ENCODE measurements at regions of chr2 and their contacts with region 1.

Region 1: DNA sequence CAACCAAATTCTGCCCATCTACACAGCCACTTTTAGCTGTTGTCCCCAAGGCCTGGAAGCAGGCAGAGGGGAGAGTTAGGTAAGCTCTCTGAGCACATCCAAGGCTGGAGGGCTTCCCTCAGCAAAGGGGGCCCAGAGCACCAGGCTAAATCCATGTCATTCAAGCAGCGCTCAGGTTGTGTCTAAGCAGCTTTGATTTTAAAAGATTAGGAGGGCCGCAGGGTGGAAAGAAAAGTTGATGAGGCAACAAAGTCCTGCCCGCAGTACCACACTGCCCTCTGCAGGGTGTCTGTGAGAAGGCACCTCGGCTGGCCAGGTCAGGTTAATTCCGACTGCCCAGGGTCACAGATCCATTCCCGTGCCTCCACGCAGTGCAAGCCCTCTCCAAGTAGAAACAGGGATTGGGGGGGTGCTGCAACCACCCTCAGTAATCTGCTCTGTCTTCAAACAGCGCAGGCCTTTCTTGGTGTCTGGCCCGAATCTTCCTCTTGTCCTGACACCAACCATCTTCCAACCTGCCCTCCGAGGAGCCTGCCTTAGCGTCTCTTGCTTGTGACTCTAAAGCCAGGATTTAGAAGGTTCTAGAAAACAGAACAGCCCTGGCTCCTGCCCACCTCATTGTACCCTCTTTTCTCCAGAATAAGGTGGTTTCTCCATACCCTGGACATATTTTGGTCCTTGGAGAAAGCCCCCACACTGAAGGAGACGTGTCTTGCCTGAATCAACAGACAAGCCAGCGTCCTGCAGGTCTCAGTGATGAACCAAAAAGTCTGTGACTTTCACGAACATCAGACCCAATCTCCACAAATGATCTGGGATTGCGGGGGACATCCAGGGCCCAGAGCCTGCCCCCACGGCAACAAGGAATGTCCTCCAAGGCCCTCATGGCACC is 289.2 kb downstream of the TNS1 start:
- DNase-seq: peak; percentile 54
- H3K4me3 Mint-ChIP-seq: no peak overlapping the region
- H3K27ac Mint-ChIP-seq: no peak overlapping the region
- H3K4me1 Mint-ChIP-seq: no peaks in the 10 kb centered on the region
- H3K27me3 Mint-ChIP-seq: peaks cover 3% of the 10 kb centered on the region

Region 2: GRCh38 chr2:216519154-216519762 is 1194.4 kb before region 1 on chr2:
- intact Hi-C with region 1: loop called (anchors 5 kb)
- DNase-seq: peak; percentile 32
- H3K4me3 Mint-ChIP-seq: no peak overlapping the region
- H3K27ac Mint-ChIP-seq: no peak overlapping the region
- H3K4me1 Mint-ChIP-seq: no peaks in the 10 kb centered on the region
- H3K27me3 Mint-ChIP-seq: no peaks in the 10 kb centered on the region

Region 3: DNA sequence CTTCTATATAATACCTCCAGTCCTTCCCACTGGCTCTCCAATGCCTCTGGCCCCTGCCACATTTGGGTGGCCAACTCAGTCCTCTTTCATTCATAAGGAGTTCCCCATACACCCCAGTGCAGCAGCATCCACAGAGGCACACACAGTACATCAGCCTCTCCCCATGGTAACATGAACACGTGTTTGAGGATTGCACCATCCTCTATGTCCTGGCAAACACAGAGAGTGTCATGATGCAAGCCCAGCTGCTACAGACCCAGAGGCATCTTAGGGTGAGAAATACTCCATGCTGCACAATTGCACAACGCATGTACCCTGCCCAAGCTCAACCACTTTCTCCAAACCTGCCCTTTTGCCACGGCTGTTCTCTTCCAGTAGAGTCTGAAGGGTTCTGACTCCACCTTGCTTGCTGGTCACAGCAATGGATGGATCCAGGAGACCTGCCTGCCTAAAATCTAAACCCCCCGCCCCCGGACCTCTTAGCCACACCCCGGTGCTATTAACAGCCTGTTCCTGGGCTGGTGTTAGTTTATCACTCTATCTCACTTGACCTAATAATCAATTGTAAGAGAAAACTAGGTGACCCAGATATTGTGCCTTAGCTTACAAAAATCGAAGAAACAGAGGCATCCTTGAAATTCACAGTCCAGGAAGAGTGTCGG is 1029.7 kb before region 1 on chr2:
- intact Hi-C with region 1: loop called (anchors 5 kb)
- DNase-seq: no peak
- H3K4me3 Mint-ChIP-seq: no peak overlapping the region
- H3K27ac Mint-ChIP-seq: no peak overlapping the region
- H3K4me1 Mint-ChIP-seq: peaks cover 10% of the 10 kb centered on the region
- H3K27me3 Mint-ChIP-seq: peaks cover 15% of the 10 kb centered on the region

Region 4: DNA sequence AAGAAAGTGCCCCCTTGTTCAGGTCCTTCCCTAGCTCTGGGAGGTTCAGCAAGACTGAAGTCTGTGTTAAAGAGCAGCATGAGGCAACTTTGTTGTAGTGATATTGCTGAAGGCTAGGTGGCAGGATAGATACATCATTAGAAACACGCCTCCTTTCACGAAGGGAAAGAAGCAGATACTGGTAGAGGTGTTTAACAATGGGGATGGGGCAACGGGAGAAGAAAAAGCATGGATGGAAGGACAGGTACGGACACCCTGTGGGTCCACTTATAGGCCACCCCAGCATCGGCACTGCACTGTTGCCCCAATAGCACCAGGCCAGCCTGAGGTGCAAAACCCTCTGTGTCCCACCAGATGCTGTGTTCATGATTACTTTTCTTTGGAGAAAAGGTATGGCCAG is 1014.7 kb before region 1 on chr2:
- intact Hi-C with region 1: loop called (anchors 5 kb)
- DNase-seq: no peak
- H3K4me3 Mint-ChIP-seq: no peak overlapping the region
- H3K27ac Mint-ChIP-seq: no peak overlapping the region
- H3K4me1 Mint-ChIP-seq: peaks cover 5% of the 10 kb centered on the region
- H3K27me3 Mint-ChIP-seq: peaks cover 36% of the 10 kb centered on the region

Region 5: DNA sequence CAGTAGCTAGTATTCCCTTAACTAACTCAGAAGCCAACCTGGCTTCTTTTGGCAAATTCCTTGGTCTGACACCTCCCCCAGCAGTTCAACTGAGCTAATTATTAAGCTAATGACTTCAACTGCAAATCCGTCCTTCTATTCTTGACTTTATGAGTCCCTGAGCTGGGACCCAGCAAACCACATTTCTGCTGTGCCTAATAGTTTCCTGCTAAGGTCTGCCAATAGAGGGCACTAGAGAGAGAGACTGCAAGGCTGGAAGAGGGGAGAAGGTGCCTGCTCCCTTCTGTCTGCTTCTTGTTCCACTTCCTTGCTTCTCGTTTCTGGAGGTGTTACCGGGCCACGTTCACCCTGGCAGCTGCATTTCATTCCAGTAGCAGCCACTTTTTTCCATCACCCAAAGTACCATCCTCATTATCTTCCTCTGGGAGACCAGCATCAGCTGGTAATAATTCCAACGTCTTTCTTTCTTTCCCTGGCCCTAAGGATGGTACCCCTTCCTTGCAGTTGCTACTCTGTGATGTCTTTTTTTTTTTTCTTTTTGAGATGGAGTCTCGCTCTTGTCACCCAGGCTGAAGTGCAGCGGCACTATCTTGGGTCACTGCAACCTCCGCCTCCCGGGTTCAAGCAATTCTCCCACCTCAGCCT is 62.8 kb before region 1 on chr2:
- intact Hi-C with region 1: loop called (anchors 1 kb)
- DNase-seq: no peak
- H3K4me3 Mint-ChIP-seq: no peak overlapping the region
- H3K27ac Mint-ChIP-seq: no peak overlapping the region
- H3K4me1 Mint-ChIP-seq: no peaks in the 10 kb centered on the region
- H3K27me3 Mint-ChIP-seq: peaks cover 6% of the 10 kb centered on the region

Region 6: GRCh38 chr2:218229239-218229638 is 515.6 kb after region 1 on chr2:
- intact Hi-C with region 1: no loop called
- DNase-seq: peak; percentile 38
- H3K4me3 Mint-ChIP-seq: peak overlapping the region; percentile 47
- H3K27ac Mint-ChIP-seq: peak overlapping the region; percentile 85
- H3K4me1 Mint-ChIP-seq: peaks cover 59% of the 10 kb centered on the region
- H3K27me3 Mint-ChIP-seq: no peaks in the 10 kb centered on the region